ENCODE measurements at regions of chr10 and their contacts with region 1.

Region 1: GRCh38 chr10:90969947-90970684 is 49.2 kb upstream of the ANKRD1 start:
- DNase-seq: no peak
- ATAC-seq: peak in 1 of 2 donors; percentile 14

Region 2: DNA sequence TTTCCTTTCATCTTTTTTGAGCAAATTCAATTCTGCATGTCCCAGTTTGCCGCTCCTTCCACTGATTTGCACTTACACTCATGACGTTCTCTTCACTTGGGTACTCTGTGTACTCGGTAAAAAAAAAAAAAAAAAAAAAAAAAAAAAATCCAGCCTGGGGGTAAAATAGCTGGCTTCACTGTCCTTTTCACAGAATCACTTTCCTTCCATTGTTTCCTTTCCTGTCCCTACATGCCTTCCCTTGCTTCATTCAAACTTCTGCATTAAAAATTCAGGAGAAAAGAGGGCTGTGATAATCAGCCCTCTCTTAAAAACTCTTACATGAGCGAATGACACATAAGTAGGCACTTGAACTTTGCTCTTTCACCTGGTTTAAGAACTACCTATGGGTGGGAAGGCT is 57.9 kb before region 1 on chr10:
- intact Hi-C with region 1: loop called (anchors 2 to 5 kb)
- DNase-seq: no peak
- ATAC-seq: peak in 1 of 2 donors; percentile 2

Region 3: GRCh38 chr10:90920986-90921666 is 49.0 kb before region 1 on chr10 and contains the start of gene ANKRD1:
- intact Hi-C with region 1: loop called (anchors 2 to 5 kb)
- DNase-seq: peak; percentile 48
- ATAC-seq: peak; percentile 86 to 90
- total RNA-seq, gene ANKRD1: 1,867 to 3,373 TPM

Measured in left cardiac atrium (tissue), 4 donors.